Breast epithelium (tissue), 4 donors: ENCODE measurements at regions of chr20 and their contacts with region 1.

Region 1: DNA sequence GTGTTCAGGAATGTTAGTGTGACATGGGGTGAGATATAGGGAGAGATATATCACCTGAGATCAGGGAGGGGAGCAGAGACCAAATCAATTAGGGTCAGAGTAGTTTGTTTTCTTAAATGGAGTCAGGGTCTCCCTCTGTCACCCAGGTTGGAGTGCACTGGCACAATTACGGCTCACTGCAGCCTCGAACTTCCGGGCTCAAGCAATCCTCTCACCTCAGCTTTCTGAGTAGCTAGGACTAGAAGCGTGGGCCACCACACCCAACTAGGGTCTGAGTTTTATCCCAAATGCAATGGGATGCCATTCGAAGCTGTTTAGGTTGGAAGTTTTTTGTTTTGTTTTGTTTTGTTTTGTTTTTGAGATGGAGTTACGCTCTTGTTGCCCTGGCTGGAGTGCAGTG is 3.1 kb upstream of the NCOA3 start:
- DNase-seq: no peak
- H3K4me3 ChIP-seq: no peak overlapping the region
- H3K27ac ChIP-seq: no peak overlapping the region
- H3K4me1 ChIP-seq: peaks cover 0 to 7% of the 10 kb centered on the region in 2 donors
- H3K27me3 ChIP-seq: no peaks in the 10 kb centered on the region
- CTCF ChIP-seq: no peak
- POLR2A ChIP-seq: no peak

Region 2: DNA sequence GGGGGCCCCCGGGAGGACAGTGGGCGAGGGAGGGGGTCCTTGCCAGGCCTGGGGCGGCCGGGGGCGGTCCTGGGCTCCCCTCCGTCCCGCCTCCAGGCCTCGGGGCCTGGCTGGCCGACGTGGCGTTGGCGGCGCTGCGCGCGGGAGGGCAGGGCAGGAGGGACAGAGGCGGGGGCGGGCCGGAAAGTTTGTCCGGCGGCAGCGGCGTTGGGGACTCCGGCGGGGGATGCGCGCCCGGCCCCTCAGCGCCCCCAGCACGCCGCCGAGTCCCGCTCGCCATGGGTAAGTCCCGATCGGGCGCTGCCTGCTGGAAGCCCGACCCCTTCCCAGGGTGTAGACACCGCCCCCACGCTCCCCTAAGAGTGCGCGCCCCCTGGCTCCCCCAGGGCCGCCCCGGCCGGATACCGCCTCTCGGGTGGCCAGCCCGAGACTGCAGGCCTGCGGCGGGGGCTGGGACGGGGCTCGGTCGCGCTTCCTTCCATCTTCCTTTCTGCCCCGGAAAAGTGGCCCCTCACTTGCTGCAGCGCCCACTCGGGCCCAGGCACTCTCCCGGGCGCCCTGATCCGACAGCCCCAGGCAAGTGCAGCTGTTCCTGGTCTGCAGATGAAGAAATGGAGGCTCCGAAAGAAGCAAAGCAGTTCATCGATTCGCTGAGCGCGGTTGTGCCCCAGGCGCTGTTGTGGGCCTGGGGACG is 789.0 kb before region 1 on chr20 and contains the start of gene SLC2A10:
- intact Hi-C with region 1: loop called (anchors 5 kb)
- DNase-seq: peak in 1 of 2 donors; percentile 71
- H3K4me3 ChIP-seq: peak within 1 kb of the TSS; percentile 72 to 84 (median 79)
- H3K27ac ChIP-seq: peak within 1 kb of the TSS; percentile 89 to 95
- H3K4me1 ChIP-seq: peaks cover 0 to 5% of the 10 kb centered on the region in 2 donors
- H3K27me3 ChIP-seq: no peaks in the 10 kb centered on the region
- CTCF ChIP-seq: no peak
- POLR2A ChIP-seq: no peak
- total RNA-seq, gene SLC2A10: 19.8 to 42.9 (median 26.9) TPM

Region 3: GRCh38 chr20:47360297-47361056 is 138.1 kb before region 1 on chr20:
- intact Hi-C with region 1: no loop called
- DNase-seq: peak; percentile 90 to 94
- H3K4me3 ChIP-seq: peak overlapping the region in 2 of 3 donors; percentile 33 to 62
- H3K27ac ChIP-seq: peak overlapping the region; percentile 99 to 100
- H3K4me1 ChIP-seq: peaks cover 31 to 51% of the 10 kb centered on the region in 2 donors
- H3K27me3 ChIP-seq: no peaks in the 10 kb centered on the region
- CTCF ChIP-seq: no peak
- POLR2A ChIP-seq: peak; percentile 59